Sciatic nerve (tissue), 2 donors: ENCODE measurements at regions of chr18 and their contacts with region 1.

Region 1: GRCh38 chr18:44411277-44411905 is 269.3 kb upstream of the SETBP1 start:
- DNase-seq: no peak
- ATAC-seq: no peak

Region 2: GRCh38 chr18:43277164-43277600 is 1134.2 kb before region 1 on chr18 and contains the start of gene SYT4:
- intact Hi-C with region 1: no loop called
- DNase-seq: peak; percentile 61
- ATAC-seq: peak; percentile 63
- total RNA-seq, gene SYT4: not detected

Region 3: DNA sequence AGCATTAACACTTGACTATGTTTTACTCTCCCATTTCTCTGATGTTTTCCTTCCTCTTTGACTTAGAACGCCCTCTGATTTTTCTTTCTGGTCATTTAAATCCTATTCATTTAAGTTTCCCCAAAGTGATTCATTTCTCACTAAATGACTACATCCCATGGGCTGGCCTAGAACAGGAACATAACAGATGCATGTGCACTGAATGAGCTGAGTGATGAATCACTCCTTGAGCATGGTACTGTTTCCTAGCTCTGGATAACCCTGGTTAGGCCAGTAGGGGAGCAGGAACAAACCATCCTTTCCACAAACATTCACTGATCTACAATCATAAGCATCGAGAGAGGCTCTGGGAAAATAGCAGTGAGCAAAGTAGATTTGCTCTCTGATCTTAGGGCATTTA is 47.4 kb after region 1 on chr18:
- intact Hi-C with region 1: loop called (anchors 1 kb)
- DNase-seq: no peak
- ATAC-seq: no peak